A549 (cell line): ENCODE measurements at regions of chr2 and their contacts with region 1.

Region 1: DNA sequence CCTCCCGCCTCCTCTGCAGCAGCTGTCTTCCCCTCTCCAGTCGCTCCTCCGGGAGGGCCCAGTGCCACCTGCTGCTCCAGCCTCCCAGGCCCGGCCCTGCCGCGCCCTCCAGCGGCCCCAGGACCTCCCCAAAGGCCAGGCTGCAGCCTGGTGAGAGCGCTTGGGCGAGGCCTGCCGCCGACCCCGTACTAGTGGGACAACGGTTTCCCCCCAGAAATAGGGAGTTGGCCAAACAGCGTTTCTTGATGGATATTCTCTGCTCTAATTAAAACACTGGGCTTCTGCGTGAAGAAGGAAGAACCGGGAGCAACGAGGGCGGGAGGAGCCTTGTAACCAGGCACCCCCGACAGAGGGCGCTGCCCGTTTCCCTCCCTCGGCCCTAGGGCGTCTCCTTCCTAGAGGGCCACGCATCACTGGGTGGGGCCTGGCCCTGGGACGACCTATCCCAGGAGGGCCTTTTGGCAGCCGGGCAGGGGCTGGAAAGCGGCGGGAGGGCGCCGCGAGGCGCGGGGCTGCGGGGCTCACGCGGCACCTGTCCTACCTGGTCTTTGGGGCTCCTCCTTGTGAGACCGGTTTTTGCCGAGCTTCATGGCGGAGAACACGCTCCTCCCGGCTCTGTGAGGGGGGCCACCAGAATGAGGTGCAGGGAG is 25.4 kb upstream of the OTOF start:
- DNase-seq: peak; percentile 91 to 99
- ATAC-seq: peak; percentile 95 to 99
- H3K4me3 ChIP-seq: peak overlapping the region; percentile 63
- H3K27ac ChIP-seq: peak overlapping the region; percentile 82 to 91
- H3K4me1 ChIP-seq: peaks cover 5% of the 10 kb centered on the region; the same call in 1 of the 3 replicates
- CTCF ChIP-seq: peak; percentile 100
- EP300 ChIP-seq: no peak
- POLR2A ChIP-seq: peak; percentile 91
- RAD21 ChIP-seq: peak; percentile 45 to 84; a peak in 4 of 5 replicates

Region 2: DNA sequence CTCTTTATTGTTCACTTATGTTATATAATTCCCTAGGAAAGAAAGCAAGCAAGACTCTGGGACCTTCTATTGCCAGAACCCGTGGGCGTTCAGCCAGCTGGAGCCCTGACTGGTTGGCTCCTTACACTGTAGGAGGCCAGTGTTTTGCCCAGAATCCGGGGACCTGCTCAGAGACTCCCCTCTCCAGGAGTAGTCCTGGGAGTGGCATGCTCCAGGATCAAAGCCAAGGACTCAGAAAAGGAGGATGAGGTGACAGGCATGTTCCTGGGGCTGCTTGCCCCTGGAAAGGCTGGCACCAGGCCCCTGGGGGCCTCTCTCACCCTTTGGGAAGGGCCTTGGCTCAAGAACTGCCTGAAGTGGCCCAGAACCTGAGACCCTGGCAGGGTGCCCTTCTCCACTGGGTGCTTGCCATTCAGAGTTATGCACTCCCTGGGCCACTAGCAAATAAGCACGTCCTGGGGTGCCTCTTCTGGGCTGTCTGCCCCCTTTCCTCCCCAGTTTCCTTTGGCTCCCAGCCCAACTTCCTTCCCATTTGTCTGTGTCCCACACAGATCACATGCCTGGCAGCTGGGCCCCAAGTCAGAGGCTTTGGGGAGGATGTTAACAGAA is 501.5 kb before region 1 on chr2:
- CTCF ChIA-PET with region 1: no interaction called
- POLR2A ChIA-PET with region 1: no interaction called
- DNase-seq: peak in 1 of 2 experiments; percentile 78
- ATAC-seq: peak; percentile 45 to 46
- H3K4me3 ChIP-seq: no peak overlapping the region
- H3K27ac ChIP-seq: peak overlapping the region; percentile 93 to 94
- H3K4me1 ChIP-seq: peaks cover 62% of the 10 kb centered on the region
- CTCF ChIP-seq: no peak
- EP300 ChIP-seq: peak; percentile 50 to 75; a peak in 2 of 5 replicates
- POLR2A ChIP-seq: no peak
- RAD21 ChIP-seq: 0 out of 5 replicates have a peak, but pooled peaks of 1 of the 2 experiments have one; percentile 26

Region 3: GRCh38 chr2:26054598-26055348 is 448.6 kb before region 1 on chr2:
- CTCF ChIA-PET with region 1: no interaction called
- POLR2A ChIA-PET with region 1: no interaction called
- DNase-seq: no peak
- ATAC-seq: peak in 1 of 2 experiments; percentile 53; a peak in 3 of 6 replicates
- H3K4me3 ChIP-seq: no peak overlapping the region
- H3K27ac ChIP-seq: no peak overlapping the region
- H3K4me1 ChIP-seq: peaks cover 74% of the 10 kb centered on the region
- CTCF ChIP-seq: no peak
- EP300 ChIP-seq: no peak
- POLR2A ChIP-seq: no peak
- RAD21 ChIP-seq: no peak

Region 4: DNA sequence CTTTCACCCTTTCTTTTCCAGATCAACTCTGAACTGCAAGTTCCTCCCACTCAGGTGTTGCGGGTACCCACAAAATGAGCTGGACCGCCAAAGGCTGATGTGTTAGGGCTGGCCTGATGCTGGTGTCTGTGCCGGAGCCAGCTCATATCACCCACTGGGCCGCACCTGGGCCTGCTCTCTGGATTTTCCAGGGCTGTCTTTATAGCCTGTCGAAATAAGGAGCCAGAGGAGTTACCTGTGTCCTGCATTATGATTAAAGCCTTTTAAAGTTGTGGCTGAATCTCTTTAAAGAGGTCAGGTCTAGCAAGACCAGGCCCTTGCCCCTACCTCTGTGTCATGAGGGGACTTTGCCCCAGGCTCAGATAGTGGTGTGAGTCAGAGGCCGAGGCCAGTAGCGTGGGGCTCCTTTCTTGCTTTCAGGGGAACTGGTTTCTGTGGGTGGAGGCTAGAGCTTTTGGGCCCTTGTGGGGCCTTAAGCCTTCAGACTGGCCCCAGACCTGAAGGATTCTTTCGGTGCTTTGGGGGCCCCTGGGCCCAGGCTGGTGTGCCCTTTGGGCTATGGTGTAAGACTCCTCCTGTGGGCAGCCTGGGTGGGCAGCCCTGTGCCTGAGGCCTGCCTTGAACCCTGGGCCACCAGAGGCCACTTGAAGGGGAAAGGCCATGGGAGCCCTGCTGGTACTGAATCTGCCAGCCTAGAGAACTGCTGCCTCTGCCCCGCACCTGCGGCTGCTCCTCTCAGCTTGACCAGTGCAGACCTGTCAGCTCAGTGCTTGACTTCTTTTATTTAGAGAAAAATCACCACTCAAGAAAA is 46.7 kb before region 1 on chr2:
- CTCF ChIA-PET with region 1: interaction called, 17 read pairs
- POLR2A ChIA-PET with region 1: no interaction called
- DNase-seq: peak in 1 of 2 experiments; percentile 43
- ATAC-seq: peak; percentile 30 to 70; a peak in 3 of 6 replicates
- H3K4me3 ChIP-seq: no peak overlapping the region
- H3K27ac ChIP-seq: peak overlapping the region; percentile 55 to 73
- H3K4me1 ChIP-seq: peaks cover 11% of the 10 kb centered on the region
- CTCF ChIP-seq: no peak
- EP300 ChIP-seq: no peak
- POLR2A ChIP-seq: no peak
- RAD21 ChIP-seq: no peak

Region 5: DNA sequence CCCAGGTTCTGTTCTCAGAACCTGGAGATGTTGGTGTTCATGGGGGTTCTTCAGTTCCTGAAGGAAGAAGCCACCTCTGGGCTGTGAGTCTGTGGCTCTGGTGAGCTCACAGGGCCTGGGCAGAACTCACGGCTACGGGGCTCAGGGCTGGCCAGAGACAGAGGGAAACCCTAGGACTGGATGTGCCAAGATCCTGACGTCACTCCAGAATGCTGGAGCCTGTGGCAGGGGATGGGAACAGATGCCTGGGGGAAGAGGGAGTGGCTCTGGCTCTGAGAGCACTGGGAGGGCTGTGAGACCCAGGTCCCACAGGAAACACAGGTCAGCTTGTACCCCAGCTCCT is 25.5 kb before region 1 on chr2 and contains the start of gene OTOF:
- CTCF ChIA-PET with region 1: interaction called, 15 read pairs
- POLR2A ChIA-PET with region 1: no interaction called
- DNase-seq: peak; percentile 14 to 44
- ATAC-seq: peak; percentile 17 to 70; a peak in 3 of 6 replicates
- H3K4me3 ChIP-seq: no peak within 1 kb of the TSS
- H3K27ac ChIP-seq: no peak within 1 kb of the TSS; a peak in 1 of 6 replicates
- H3K4me1 ChIP-seq: peaks cover 4% of the 10 kb centered on the region; the same call in 1 of the 3 replicates
- CTCF ChIP-seq: no peak
- EP300 ChIP-seq: no peak
- POLR2A ChIP-seq: no peak
- RAD21 ChIP-seq: no peak
- polyA plus RNA-seq, gene OTOF: 0.13 and 0.22 TPM in 2 replicates

Region 6: DNA sequence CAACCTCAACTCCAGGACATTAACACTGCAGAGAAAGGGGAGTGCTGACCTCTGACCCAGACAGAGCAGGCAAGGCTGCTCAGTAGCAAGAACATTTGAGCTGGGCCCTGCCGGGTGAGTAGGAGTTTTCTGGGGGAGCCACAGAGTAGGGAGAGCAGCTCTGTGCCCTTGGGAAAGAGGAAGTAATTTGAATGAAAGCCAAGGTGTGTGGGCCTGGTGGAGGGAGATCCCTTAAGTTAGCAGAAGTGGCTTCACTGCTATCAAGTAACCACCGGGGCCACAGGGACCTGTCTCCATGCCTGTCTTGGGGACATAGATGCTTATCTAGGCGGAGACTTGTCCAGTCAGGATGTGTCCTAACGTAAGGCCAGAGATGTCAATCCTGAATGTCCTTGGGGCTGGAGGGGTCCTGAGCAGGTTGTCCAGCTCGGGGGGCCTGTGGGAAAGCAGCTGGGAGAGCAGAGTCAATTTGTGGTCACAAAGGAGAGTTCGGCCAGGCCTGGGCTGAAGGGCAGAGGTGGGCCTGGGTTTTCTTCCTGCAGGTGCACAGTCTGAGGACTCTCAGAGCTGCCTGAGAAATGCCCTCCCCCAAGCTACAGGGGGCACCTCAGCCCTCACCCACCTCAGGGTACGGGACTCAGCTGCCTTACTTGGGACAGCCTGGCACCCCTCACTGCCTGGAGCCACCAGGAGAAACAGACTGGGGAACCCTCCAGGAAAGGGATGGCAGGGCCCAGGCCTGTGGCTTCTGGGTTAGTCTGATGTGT is 10.4 kb before region 1 on chr2:
- CTCF ChIA-PET with region 1: interaction called, 31 read pairs
- POLR2A ChIA-PET with region 1: no interaction called
- DNase-seq: no peak
- ATAC-seq: no peak
- H3K4me3 ChIP-seq: no peak overlapping the region
- H3K27ac ChIP-seq: no peak overlapping the region
- H3K4me1 ChIP-seq: no peaks in the 10 kb centered on the region
- CTCF ChIP-seq: no peak
- EP300 ChIP-seq: no peak
- POLR2A ChIP-seq: no peak
- RAD21 ChIP-seq: no peak

Region 7: DNA sequence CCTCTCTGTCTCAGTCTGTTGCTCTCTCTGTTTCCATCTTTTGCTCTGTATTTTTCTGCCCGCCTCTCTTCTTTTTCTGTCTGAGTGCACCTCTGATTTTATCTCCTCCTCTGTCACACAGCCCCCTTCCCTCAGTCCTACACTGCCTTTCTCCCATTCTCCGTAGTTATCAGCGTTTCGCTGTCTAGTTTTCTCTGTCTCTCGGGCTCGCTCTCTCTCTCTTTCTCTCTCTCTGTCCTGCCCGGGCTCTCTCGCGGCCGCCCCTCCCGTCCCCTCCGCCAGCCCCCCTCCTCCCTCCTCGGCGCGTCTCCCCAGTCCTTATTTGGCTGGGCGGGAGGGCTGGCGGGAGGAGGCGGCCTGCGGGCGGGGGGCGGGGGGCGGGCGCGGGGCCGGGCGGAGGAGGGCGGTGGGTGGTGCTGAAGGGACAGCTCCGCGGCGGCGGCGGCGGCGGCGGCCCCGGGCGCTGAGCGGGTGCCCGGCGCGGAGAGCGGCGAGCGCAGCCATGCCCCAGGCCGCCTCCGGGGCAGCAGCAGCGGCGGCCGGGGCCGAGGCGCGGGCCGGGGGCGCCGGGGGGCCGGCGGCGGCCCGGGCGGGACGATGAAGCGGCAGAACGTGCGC is 189.0 kb after region 1 on chr2 and contains the start of gene KCNK3:
- CTCF ChIA-PET with region 1: no interaction called
- POLR2A ChIA-PET with region 1: no interaction called
- DNase-seq: peak in 1 of 2 experiments; percentile 50
- ATAC-seq: peak; percentile 55 to 70
- H3K4me3 ChIP-seq: peak within 1 kb of the TSS; percentile 36
- H3K27ac ChIP-seq: peak within 1 kb of the TSS in 1 of 2 experiments; percentile 40; a peak in 2 of 6 replicates
- H3K4me1 ChIP-seq: peaks cover 27% of the 10 kb centered on the region
- CTCF ChIP-seq: no peak
- EP300 ChIP-seq: no peak
- POLR2A ChIP-seq: no peak
- RAD21 ChIP-seq: no peak
- polyA plus RNA-seq, gene KCNK3: 2.8 and 3.5 TPM in 2 replicates